CD4-positive, alpha-beta T cell (primary cell): ENCODE measurements at regions of chr6 and their contacts with region 1.

Region 1: GRCh38 chr6:149508485-149508884 is 23.7 kb upstream of the ZC3H12D start:
- DNase-seq: peak in 6 of 14 experiments; percentile 29 to 87 (median 66)
- ATAC-seq: peak; percentile 94
- H3K4me3 ChIP-seq: no peak overlapping the region
- H3K4me3 Mint-ChIP-seq: peak overlapping the region; percentile 30
- H3K27ac ChIP-seq: peak overlapping the region; percentile 11 to 18
- H3K27ac Mint-ChIP-seq: peak overlapping the region; percentile 87
- H3K4me1 ChIP-seq: no peaks in the 10 kb centered on the region
- H3K4me1 Mint-ChIP-seq: peaks cover 39% of the 10 kb centered on the region
- H3K27me3 ChIP-seq: no peaks in the 10 kb centered on the region
- H3K27me3 Mint-ChIP-seq: no peaks in the 10 kb centered on the region
- CTCF ChIP-seq: no peak

Region 2: GRCh38 chr6:149493761-149494320 is 14.6 kb before region 1 on chr6:
- CTCF ChIA-PET with region 1: interaction called, 9 read pairs
- POLR2A ChIA-PET with region 1: interaction called, 79 read pairs
- intact Hi-C with region 1: loop called in 1 of 2 experiments (anchors 1 kb)
- DNase-seq: no peak
- ATAC-seq: no peak
- H3K4me3 ChIP-seq: no peak overlapping the region
- H3K4me3 Mint-ChIP-seq: no peak overlapping the region
- H3K27ac ChIP-seq: peak overlapping the region; percentile 81 to 93
- H3K27ac Mint-ChIP-seq: peak overlapping the region; percentile 89
- H3K4me1 ChIP-seq: peaks cover 55% of the 10 kb centered on the region
- H3K4me1 Mint-ChIP-seq: peaks cover 60% of the 10 kb centered on the region
- H3K27me3 ChIP-seq: no peaks in the 10 kb centered on the region
- H3K27me3 Mint-ChIP-seq: no peaks in the 10 kb centered on the region
- CTCF ChIP-seq: no peak